Caco-2 (cell line): ENCODE measurements at regions of chr12 and their contacts with region 1.

Region 1: DNA sequence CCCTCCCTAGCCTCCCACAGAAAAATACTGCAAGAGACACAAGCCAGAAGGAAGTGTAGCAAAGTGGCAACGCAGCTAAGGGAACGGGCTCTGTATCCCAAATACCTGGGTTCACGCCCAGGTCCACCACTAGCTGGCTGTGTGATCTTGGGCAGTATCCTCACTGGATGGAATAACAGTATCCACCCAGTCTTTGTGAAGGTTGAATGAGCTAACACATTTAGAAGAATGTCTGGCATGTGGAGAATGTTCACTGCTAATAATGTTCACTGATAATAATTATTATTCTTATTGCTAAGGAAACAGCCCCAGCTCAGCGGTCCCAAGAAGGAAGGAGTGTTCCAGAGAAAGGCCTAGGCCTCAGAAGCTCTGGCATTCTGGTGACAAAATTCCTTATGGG is 70.9 kb downstream of the VWF start:
- DNase-seq: peak; percentile 70 to 73
- H3K4me3 ChIP-seq: no peak overlapping the region
- H3K4me3 Mint-ChIP-seq: no peak overlapping the region
- H3K27ac Mint-ChIP-seq: peak overlapping the region; percentile 61
- H3K4me1 ChIP-seq: peaks cover 24% of the 10 kb centered on the region
- H3K4me1 Mint-ChIP-seq: peaks cover 11% of the 10 kb centered on the region
- H3K27me3 ChIP-seq: no peaks in the 10 kb centered on the region
- H3K27me3 Mint-ChIP-seq: no peaks in the 10 kb centered on the region
- CTCF ChIP-seq: peak in 1 of 2 experiments; percentile 25

Region 2: GRCh38 chr12:6285063-6285477 is 231.5 kb after region 1 on chr12:
- CTCF ChIA-PET with region 1: interaction called, 10 read pairs
- POLR2A ChIA-PET with region 1: no interaction called
- intact Hi-C with region 1: no loop called
- DNase-seq: peak; percentile 76 to 87
- H3K4me3 ChIP-seq: no peak overlapping the region
- H3K4me3 Mint-ChIP-seq: no peak overlapping the region
- H3K27ac Mint-ChIP-seq: no peak overlapping the region
- H3K4me1 ChIP-seq: peaks cover 10% of the 10 kb centered on the region
- H3K4me1 Mint-ChIP-seq: peaks cover 11% of the 10 kb centered on the region
- H3K27me3 ChIP-seq: no peaks in the 10 kb centered on the region
- H3K27me3 Mint-ChIP-seq: no peaks in the 10 kb centered on the region
- CTCF ChIP-seq: peak; percentile 94 to 99

Region 3: DNA sequence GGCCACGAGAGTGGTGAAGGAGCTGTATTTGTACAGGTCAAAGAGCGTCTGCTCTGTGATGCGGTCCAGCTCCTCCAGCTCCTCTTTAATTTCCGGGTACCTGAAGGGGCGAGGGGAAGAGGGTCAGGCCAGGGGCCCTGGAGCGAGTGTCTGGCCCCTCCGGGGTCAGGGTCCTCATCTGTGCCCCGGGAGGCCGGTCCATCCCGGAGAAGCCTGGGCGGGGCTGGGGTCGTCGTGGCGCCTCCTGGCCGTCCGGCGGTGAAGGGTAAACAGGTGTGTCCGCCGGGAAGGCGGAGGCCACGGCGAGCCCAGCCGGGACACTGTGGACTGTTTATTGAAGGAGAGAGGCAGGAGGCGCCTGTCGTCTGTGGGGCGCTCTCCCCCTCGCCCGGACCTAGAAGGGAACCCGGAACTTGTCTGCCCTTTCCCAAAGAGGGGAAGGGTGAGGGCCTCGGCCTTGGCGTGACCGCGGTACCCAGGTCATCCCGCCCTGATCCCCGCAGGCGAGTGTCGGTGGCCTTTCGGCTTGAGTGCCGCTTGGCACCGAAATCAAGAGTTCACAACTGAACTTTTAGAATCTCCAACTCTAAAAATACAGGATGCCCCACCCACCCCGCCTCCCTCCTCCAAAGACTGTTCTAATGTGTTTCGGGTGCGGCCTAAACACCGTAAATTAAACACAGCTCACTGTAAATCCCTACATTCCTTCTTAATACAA is 310.2 kb after region 1 on chr12:
- CTCF ChIA-PET with region 1: no interaction called
- POLR2A ChIA-PET with region 1: no interaction called
- intact Hi-C with region 1: no loop called
- DNase-seq: peak; percentile 95
- H3K4me3 ChIP-seq: peak overlapping the region; percentile 74
- H3K4me3 Mint-ChIP-seq: peak overlapping the region; percentile 79
- H3K27ac Mint-ChIP-seq: peak overlapping the region; percentile 72
- H3K4me1 ChIP-seq: peaks cover 13% of the 10 kb centered on the region
- H3K4me1 Mint-ChIP-seq: peaks cover 26% of the 10 kb centered on the region
- H3K27me3 ChIP-seq: no peaks in the 10 kb centered on the region
- H3K27me3 Mint-ChIP-seq: no peaks in the 10 kb centered on the region
- CTCF ChIP-seq: peak; percentile 28 to 52